Activated CD4-positive, alpha-beta memory T cell treated with anti-CD3 and anti-CD28 coated beads for 36 hours (primary cell): ENCODE measurements at regions of chr17 and their contacts with region 1.

Region 1: GRCh38 chr17:29931231-29931932 is 1.4 kb upstream of the SSH2 start:
- DNase-seq: peak; percentile 75
- H3K4me3 Mint-ChIP-seq: no peak overlapping the region
- H3K27ac Mint-ChIP-seq: no peak overlapping the region
- H3K4me1 Mint-ChIP-seq: peaks cover 18% of the 10 kb centered on the region
- H3K27me3 Mint-ChIP-seq: no peaks in the 10 kb centered on the region

Region 2: GRCh38 chr17:29622337-29623282 is 308.8 kb before region 1 on chr17 and contains the start of gene CORO6:
- CTCF ChIA-PET with region 1: interaction called, 51 read pairs
- POLR2A ChIA-PET with region 1: interaction called, 18 read pairs
- intact Hi-C with region 1: loop called (anchors 2 kb)
- DNase-seq: peak; percentile 74
- H3K4me3 Mint-ChIP-seq: peak within 1 kb of the TSS; percentile 78
- H3K27ac Mint-ChIP-seq: peak within 1 kb of the TSS; percentile 85
- H3K4me1 Mint-ChIP-seq: peaks cover 60% of the 10 kb centered on the region
- H3K27me3 Mint-ChIP-seq: no peaks in the 10 kb centered on the region
- total RNA-seq, gene CORO6: 21.3 to 22.1 TPM

Region 3: DNA sequence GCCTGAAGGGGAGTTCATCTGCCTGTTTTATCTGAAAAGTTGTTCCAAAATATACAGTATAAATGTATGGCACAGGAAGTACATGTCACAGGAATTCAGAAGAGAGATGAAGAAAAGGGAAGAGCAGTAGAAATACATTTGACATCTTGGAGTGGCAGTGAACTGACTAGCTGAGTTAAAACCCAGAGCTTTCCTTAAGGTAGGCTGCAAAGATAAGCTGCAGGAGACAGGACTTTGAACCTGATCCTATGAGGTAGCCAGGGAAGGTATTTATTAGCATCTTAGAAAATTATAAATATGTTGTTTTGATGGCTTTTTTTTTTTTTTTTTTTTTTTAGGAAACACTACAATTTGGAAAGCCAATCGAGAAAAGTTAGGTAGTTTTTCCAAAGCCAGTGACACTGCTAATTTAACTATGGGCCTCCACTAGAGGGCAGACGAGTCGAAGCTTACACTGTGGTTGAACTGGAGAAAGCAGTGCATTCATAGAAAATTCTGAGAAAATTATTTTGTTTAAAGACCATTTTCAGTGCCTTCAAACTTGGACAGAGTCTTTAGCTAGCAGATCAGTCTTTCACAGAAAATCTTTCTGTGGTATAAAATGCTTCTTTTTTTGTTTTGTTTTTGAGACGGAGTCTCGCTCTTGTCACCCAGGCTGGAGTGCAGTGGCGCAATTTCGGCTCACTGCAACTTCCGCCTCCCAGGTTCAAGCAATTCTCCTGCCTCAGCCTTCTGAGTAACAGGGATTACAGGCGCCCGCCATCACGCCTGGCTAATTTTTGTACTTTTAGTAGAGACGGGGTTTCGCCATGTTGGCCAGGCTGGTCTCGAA is 123.6 kb before region 1 on chr17:
- CTCF ChIA-PET with region 1: interaction called, 381 read pairs
- POLR2A ChIA-PET with region 1: interaction called, 9 read pairs
- intact Hi-C with region 1: loop called (anchors 1 kb)
- DNase-seq: peak; percentile 72
- H3K4me3 Mint-ChIP-seq: no peak overlapping the region
- H3K27ac Mint-ChIP-seq: no peak overlapping the region
- H3K4me1 Mint-ChIP-seq: peaks cover 20% of the 10 kb centered on the region
- H3K27me3 Mint-ChIP-seq: no peaks in the 10 kb centered on the region

Region 4: GRCh38 chr17:29855686-29856085 is 75.7 kb before region 1 on chr17:
- CTCF ChIA-PET with region 1: interaction called, 11 read pairs
- POLR2A ChIA-PET with region 1: no interaction called
- intact Hi-C with region 1: no loop called
- DNase-seq: no peak
- H3K4me3 Mint-ChIP-seq: no peak overlapping the region
- H3K27ac Mint-ChIP-seq: no peak overlapping the region
- H3K4me1 Mint-ChIP-seq: peaks cover 3% of the 10 kb centered on the region
- H3K27me3 Mint-ChIP-seq: no peaks in the 10 kb centered on the region

Region 5: GRCh38 chr17:29918922-29919856 is 12.2 kb before region 1 on chr17:
- CTCF ChIA-PET with region 1: interaction called, 51 read pairs
- POLR2A ChIA-PET with region 1: interaction called, 5 read pairs
- intact Hi-C with region 1: no loop called
- DNase-seq: no peak
- H3K4me3 Mint-ChIP-seq: no peak overlapping the region
- H3K27ac Mint-ChIP-seq: no peak overlapping the region
- H3K4me1 Mint-ChIP-seq: peaks cover 30% of the 10 kb centered on the region
- H3K27me3 Mint-ChIP-seq: no peaks in the 10 kb centered on the region

Region 6: GRCh38 chr17:29973005-29973404 is 41.6 kb after region 1 on chr17:
- CTCF ChIA-PET with region 1: no interaction called
- POLR2A ChIA-PET with region 1: no interaction called
- intact Hi-C with region 1: no loop called
- DNase-seq: no peak
- H3K4me3 Mint-ChIP-seq: no peak overlapping the region
- H3K27ac Mint-ChIP-seq: no peak overlapping the region
- H3K4me1 Mint-ChIP-seq: no peaks in the 10 kb centered on the region
- H3K27me3 Mint-ChIP-seq: no peaks in the 10 kb centered on the region